Kidney (tissue), 22 donors: ENCODE measurements at regions of chr21 and their contacts with region 1.

Region 1: DNA sequence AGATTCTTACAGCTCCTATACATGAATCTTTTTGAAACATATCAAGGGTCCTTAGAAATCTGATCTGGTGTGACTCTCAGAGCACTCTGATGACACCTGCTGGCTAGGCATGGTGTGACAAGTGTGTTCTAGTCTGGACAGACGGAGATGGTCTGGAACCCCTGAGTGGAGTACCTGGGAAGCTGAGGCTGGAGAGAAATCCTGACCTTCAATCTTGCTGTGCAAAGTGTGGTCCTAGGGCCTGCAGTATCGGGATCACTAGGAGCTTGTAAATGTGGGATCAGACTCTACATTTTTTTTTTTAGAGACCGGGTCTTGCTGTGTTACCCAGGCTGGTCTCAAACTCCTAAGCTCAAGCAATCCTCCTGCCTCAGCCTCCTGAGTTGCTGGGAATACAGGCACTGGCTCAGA is 78.6 kb upstream of the SOD1 start:
- DNase-seq: peak in 4 of 5 donors; percentile 76 to 89 (median 80)
- H3K4me3 ChIP-seq: no peak overlapping the region
- H3K27ac ChIP-seq: no peak overlapping the region
- H3K4me1 ChIP-seq: no peaks in the 10 kb centered on the region
- H3K27me3 ChIP-seq: no peaks in the 10 kb centered on the region
- CTCF ChIP-seq: peak; percentile 91

Region 2: GRCh38 chr21:31198575-31198974 is 382.3 kb before region 1 on chr21:
- intact Hi-C with region 1: loop called (anchors 10 kb)
- DNase-seq: peak in 2 of 5 donors; percentile 80 to 81
- H3K4me3 ChIP-seq: no peak overlapping the region
- H3K27ac ChIP-seq: no peak overlapping the region
- H3K4me1 ChIP-seq: no peaks in the 10 kb centered on the region
- H3K27me3 ChIP-seq: no peaks in the 10 kb centered on the region
- CTCF ChIP-seq: peak; percentile 45

Region 3: GRCh38 chr21:31629972-31630711 is 49.3 kb after region 1 on chr21:
- intact Hi-C with region 1: no loop called
- DNase-seq: peak in 2 of 5 donors; percentile 17 to 46
- H3K4me3 ChIP-seq: no peak overlapping the region
- H3K27ac ChIP-seq: no peak overlapping the region
- H3K4me1 ChIP-seq: peaks cover 0 to 8% (median 0%) of the 10 kb centered on the region in 3 donors
- H3K27me3 ChIP-seq: no peaks in the 10 kb centered on the region
- CTCF ChIP-seq: no peak